ENCODE measurements at regions of chr11 and their contacts with region 1.

Region 1: DNA sequence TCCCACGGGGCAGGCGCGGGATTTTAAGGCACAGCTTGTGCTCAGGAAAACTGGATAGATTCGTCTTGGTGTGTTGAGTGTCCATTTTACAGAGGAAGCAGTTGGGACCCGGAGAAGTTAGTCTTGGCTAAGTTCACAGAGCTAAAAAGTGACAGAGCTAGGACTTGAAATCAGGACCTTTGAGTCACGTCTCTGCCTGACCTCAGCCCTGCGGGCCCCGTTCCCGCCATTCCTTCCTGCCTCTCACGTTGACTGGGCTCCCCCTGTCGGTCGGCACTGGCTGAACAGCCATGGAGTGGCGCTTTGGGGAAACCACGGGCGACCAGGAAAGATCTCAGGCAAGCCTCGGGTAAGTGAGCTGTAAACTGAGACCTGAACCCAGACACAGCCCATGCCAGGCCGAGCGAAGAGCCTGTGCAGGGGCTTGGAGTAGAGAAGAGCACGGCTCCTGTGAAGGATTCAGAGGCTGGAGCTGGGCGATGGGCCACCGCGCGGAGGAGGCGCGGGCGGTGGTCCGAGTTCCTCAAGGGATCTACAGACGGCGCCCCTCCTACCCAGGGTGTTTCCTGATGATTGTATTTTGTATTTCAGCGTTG is 54.1 kb downstream of the WNT11 start:
- DNase-seq: peak; percentile 82 to 88
- H3K4me3 ChIP-seq: peak overlapping the region in 2 of 3 donors; percentile 5 to 22
- H3K27ac ChIP-seq: no peak overlapping the region
- H3K4me1 ChIP-seq: peaks cover 0 to 13% of the 10 kb centered on the region in 2 donors
- H3K27me3 ChIP-seq: no peaks in the 10 kb centered on the region
- CTCF ChIP-seq: peak; percentile 84 to 97 (median 96)
- POLR2A ChIP-seq: no peak

Region 2: GRCh38 chr11:75721855-75722668 is 430.1 kb before region 1 on chr11:
- intact Hi-C with region 1: loop called (anchors 10 kb)
- DNase-seq: no peak
- H3K4me3 ChIP-seq: no peak overlapping the region
- H3K27ac ChIP-seq: no peak overlapping the region
- H3K4me1 ChIP-seq: no peaks in the 10 kb centered on the region
- H3K27me3 ChIP-seq: no peaks in the 10 kb centered on the region
- CTCF ChIP-seq: no peak
- POLR2A ChIP-seq: no peak

Region 3: GRCh38 chr11:75802913-75803820 is 349.0 kb before region 1 on chr11:
- intact Hi-C with region 1: loop called (anchors 5 kb)
- DNase-seq: peak; percentile 75 to 78
- H3K4me3 ChIP-seq: no peak overlapping the region
- H3K27ac ChIP-seq: no peak overlapping the region
- H3K4me1 ChIP-seq: no peaks in the 10 kb centered on the region
- H3K27me3 ChIP-seq: no peaks in the 10 kb centered on the region
- CTCF ChIP-seq: peak; percentile 76 to 91 (median 88)
- POLR2A ChIP-seq: no peak

Region 4: GRCh38 chr11:75896843-75897419 is 255.3 kb before region 1 on chr11:
- intact Hi-C with region 1: loop called (anchors 5 kb)
- DNase-seq: no peak
- H3K4me3 ChIP-seq: no peak overlapping the region
- H3K27ac ChIP-seq: no peak overlapping the region
- H3K4me1 ChIP-seq: no peaks in the 10 kb centered on the region
- H3K27me3 ChIP-seq: no peaks in the 10 kb centered on the region
- CTCF ChIP-seq: peak; percentile 49 to 87 (median 66)
- POLR2A ChIP-seq: no peak

Region 5: GRCh38 chr11:76107971-76108370 is 44.2 kb before region 1 on chr11:
- intact Hi-C with region 1: no loop called
- DNase-seq: no peak
- H3K4me3 ChIP-seq: no peak overlapping the region
- H3K27ac ChIP-seq: no peak overlapping the region
- H3K4me1 ChIP-seq: peaks cover 0 to 1% of the 10 kb centered on the region in 2 donors
- H3K27me3 ChIP-seq: no peaks in the 10 kb centered on the region
- CTCF ChIP-seq: no peak
- POLR2A ChIP-seq: no peak

Measured in thyroid gland (tissue), 4 donors.